ENCODE measurements at regions of chr18 and their contacts with region 1.

Region 1: DNA sequence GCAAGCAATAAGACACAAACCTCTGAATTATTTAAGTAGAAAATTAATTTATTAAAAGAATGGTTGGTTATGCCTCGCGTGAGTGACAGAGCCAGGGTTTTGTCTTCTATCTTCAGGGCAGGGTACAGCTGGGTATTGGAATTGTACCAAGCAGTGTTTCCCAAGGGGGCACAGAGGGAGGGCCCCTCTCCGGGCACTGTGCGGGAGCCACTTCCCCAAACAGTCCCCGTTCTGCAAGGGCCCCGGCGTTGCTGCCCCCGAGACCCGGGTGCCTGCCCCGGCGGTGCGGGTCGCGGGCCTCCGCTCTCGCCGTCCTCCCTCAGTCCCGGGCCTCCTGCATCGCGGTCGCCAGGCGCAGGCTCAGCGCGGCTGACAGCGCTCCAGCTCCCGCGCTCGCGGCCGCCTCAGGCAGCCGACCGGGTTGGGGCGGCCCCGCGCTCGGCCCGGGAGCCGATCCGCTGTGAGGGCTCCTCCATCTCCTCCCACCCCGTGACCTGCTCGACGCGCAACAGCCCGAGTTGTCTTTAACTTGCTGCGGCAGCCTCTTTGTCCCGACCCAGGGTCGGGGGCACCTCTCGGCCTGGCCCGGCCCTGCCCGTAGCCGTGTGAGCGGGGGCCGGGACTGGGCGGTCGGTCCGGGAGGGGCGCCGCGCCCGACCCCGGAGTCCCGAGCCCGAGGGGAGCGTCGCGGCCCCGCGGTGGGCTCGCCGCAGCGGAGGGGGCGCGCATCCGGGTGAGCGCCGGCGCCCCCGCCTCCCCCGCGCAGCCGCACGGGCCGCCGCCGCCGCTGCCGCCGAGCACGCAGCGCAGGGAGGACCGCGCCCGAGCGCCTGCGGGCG is 620 bp upstream of the GALNT1 start:
- DNase-seq: peak; percentile 93
- H3K4me3 ChIP-seq: peak overlapping the region; percentile 57 to 87 (median 70)
- H3K27ac ChIP-seq: peak overlapping the region; percentile 93 to 97 (median 95)
- H3K4me1 ChIP-seq: peaks cover 10 to 41% (median 23%) of the 10 kb centered on the region in 6 donors
- H3K27me3 ChIP-seq: no peaks in the 10 kb centered on the region
- CTCF ChIP-seq: no peak
- POLR2A ChIP-seq: no peak

Region 2: GRCh38 chr18:35407871-35408481 is 172.9 kb before region 1 on chr18:
- intact Hi-C with region 1: loop called (anchors 10 kb)
- DNase-seq: no peak
- H3K4me3 ChIP-seq: no peak overlapping the region
- H3K27ac ChIP-seq: no peak overlapping the region
- H3K4me1 ChIP-seq: peaks cover 0 to 48% (median 20%) of the 10 kb centered on the region in 6 donors
- H3K27me3 ChIP-seq: no peaks in the 10 kb centered on the region
- CTCF ChIP-seq: peak; percentile 53 to 82 (median 74)
- POLR2A ChIP-seq: no peak

Region 3: DNA sequence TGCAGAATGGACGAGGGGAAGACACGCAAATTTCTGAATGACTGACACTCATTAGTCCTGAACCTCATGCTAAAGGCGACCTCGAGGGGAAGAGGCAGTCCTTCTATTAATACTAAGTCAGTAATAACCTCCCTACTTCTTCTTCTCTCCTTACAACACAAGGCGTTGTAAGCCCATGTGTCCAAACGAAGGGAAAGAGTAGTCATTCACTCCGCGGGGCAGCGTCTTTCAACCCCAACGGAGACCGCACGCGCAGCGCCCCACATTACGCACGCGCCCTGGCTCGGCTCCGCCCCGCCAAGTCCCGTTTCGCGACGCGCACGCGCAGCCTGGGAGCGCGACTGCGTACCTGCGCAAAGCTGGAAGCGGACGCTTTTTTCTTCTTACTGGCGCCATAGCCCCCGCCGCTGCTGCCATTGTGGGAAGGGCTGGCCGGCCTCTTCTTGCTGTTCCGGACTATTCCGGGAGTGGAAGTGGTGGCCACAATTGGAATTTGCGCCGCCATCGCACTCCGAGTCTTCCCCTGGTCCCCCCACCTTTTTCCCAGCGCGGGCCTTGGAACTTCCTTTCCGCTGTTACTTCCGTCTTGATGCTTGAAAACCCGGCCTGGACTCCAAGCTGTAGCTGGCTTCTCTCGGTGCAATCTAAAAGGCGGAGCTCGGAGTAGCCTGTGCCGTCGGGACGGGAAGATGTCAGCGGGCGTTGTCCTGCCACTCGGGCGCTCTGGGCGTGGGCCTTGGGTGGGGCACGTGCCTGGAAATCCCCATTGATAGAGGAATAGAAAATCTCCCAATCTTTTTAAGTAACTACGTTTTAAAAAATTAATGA is 83.3 kb before region 1 on chr18 and contains the start of gene INO80C:
- intact Hi-C with region 1: loop called (anchors 5 kb)
- DNase-seq: peak; percentile 98
- H3K4me3 ChIP-seq: peak within 1 kb of the TSS; percentile 52 to 81 (median 64)
- H3K27ac ChIP-seq: peak within 1 kb of the TSS; percentile 95 to 98 (median 97)
- H3K4me1 ChIP-seq: peaks cover 10 to 67% (median 42%) of the 10 kb centered on the region in 6 donors
- H3K27me3 ChIP-seq: no peaks in the 10 kb centered on the region
- CTCF ChIP-seq: peak in 3 of 11 experiments; percentile 20 to 31 (median 26)
- POLR2A ChIP-seq: peak; percentile 63 to 81 (median 73)
- total RNA-seq, gene INO80C: 18.9 to 45.4 (median 31.3) TPM

Region 4: GRCh38 chr18:35616664-35617423 is 35.9 kb after region 1 on chr18:
- intact Hi-C with region 1: no loop called
- DNase-seq: peak; percentile 87
- H3K4me3 ChIP-seq: peak overlapping the region in 1 of 8 donors; percentile 28
- H3K27ac ChIP-seq: peak overlapping the region in 7 of 8 donors; percentile 53 to 82 (median 77)
- H3K4me1 ChIP-seq: peaks cover 20 to 66% (median 43%) of the 10 kb centered on the region in 6 donors
- H3K27me3 ChIP-seq: no peaks in the 10 kb centered on the region
- CTCF ChIP-seq: no peak
- POLR2A ChIP-seq: no peak